Sigmoid colon (tissue), 7 donors: ENCODE measurements at regions of chr5 and their contacts with region 1.

Region 1: DNA sequence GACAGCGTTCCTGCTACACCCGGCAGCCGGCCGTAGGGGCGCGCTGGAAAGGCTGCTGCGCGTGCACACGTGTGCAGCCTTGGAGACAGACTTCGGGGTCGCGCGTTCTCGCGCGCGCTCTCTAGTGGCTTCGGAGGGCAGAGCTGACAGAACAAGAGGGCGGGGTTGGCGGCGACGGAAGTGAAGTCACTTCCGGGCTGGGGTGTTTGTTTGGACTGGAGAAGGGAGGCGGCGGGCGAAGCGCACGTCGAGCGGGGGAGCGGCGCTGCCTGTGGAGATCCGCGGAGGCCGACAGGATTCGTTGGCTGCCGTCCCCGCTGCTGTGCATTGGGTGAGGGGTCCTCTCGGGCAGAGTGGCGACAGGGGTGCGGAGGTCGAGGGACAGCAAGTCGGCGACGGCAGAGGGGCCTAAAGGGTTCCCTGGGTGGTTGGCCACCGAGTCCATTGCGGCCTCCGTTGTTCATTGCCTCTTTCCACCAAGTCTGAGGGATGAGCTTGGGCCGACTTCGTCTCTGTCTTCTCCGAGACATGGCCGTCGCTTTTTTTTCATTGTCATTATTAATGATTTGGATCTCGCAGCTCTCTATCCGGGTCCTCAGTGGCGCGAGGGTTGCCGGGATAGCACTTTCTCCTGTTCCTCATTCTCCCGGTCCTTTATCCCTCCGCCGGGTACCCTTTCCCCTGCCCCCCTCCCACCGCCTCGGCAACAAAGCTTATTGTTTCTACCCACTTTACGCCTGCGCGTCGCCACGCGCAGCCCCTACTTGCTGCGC is at the start of gene PAIP2:
- DNase-seq: peak; percentile 99
- H3K4me3 ChIP-seq: peak within 1 kb of the TSS; percentile 65 to 91 (median 84)
- H3K27ac ChIP-seq: peak within 1 kb of the TSS; percentile 93 to 98 (median 96)
- H3K4me1 ChIP-seq: peaks cover 0 to 46% (median 26%) of the 10 kb centered on the region in 4 donors
- H3K27me3 ChIP-seq: no peaks in the 10 kb centered on the region
- CTCF ChIP-seq: peak; percentile 60 to 71 (median 65)
- EP300 ChIP-seq: no peak
- POLR2A ChIP-seq: peak; percentile 84 to 86
- total RNA-seq, gene PAIP2: 96.5 to 146 (median 109) TPM

Region 2: DNA sequence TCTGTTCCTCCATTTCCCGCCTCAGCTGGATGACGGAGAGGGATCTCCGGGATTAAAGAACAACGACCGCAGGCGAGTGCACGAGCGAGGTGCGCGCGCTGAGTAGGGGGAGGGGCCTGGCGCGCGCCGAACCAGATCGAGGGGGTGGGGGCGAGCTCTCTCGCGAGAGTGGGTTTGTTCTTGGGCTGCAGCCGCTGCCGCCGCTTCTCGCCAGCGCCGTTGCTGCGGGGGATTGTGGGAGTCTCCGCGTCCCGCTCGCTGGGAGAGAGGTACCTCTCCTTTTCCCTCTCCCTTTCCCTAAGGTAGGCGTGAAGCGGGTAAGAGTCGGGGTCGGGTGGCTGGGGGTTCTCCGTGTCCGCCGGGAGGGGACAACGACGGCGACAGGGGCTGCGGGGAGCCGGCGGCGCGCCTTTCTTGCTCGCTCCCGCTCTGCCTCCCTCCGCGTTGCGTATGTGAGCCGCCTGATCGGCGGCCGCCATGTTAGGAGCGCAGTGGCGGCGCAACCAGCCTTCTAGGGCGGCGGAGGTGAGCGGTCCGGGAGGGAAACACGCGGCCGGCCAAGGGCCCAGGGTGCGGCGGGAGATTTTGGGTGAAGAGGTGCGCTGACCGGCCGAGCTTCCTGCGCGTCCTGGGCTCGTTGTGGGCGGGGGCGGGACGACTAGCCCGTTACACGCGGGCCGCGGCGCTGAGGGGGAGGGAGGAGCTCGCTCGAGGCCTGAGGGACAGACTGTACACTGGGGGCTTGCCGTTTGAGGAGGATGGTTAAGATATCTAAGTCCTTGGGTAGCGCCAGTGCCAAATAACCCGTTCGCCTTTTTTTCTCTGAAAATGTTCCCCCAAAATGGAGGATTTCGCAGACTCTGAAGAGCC is 48.1 kb before region 1 on chr5 and contains the start of gene MATR3:
- intact Hi-C with region 1: loop called (anchors 2 kb)
- DNase-seq: peak; percentile 98
- H3K4me3 ChIP-seq: peak within 1 kb of the TSS; percentile 70 to 94 (median 72)
- H3K27ac ChIP-seq: peak within 1 kb of the TSS; percentile 94 to 100 (median 99)
- H3K4me1 ChIP-seq: peaks cover 0 to 45% (median 39%) of the 10 kb centered on the region in 4 donors
- H3K27me3 ChIP-seq: no peaks in the 10 kb centered on the region
- CTCF ChIP-seq: no peak
- EP300 ChIP-seq: peak in 1 of 4 donors; percentile 61
- POLR2A ChIP-seq: peak; percentile 98
- total RNA-seq, gene MATR3: 194 to 272 (median 228) TPM

Region 3: DNA sequence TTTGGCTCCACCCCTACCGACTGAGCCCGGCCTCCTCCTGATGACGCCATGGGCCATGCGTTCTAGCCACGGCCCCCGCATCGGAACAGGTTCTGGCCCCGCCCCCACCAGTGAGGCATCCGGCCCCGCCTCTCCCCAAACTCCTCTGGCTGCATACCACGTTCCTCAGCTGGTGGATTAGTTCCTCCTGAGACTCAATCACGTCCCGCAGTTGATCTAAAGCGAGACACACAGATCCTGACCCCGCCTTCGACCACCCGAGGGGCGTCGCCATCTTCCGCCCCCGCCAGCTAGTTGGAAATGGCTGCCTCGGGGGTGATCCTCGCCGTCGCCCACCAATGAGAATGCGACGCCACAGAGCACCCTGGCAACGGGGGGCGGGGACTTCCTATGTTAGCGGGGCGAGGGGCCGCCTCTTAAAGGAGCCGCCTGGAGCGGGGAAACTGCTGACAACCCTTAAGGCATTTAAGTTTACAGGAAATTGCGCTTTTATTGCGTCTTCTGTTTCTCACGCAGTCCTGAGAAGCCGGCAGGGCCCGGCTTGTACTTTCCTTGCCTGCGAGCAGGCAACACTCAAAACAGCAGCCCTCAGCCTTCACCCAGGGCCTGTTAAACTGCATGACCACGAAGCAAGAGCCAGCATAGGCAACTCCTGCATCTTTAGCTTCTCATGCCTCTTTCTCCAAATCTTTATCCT is 62.1 kb after region 1 on chr5 and contains the start of gene SPATA24:
- intact Hi-C with region 1: loop called (anchors 5 kb)
- DNase-seq: peak; percentile 99
- H3K4me3 ChIP-seq: peak within 1 kb of the TSS; percentile 37 to 55 (median 52)
- H3K27ac ChIP-seq: peak within 1 kb of the TSS; percentile 86 to 93 (median 90)
- H3K4me1 ChIP-seq: peaks cover 0 to 14% (median 12%) of the 10 kb centered on the region in 4 donors
- H3K27me3 ChIP-seq: no peaks in the 10 kb centered on the region
- CTCF ChIP-seq: no peak
- EP300 ChIP-seq: peak in 1 of 4 donors; percentile 17
- POLR2A ChIP-seq: no peak
- total RNA-seq, gene SPATA24: 1.4 to 7.9 (median 2.0) TPM